Natural killer cell (primary cell): ENCODE measurements at regions of chr4 and their contacts with region 1.

Region 1: GRCh38 chr4:39032218-39033085 is at the start of gene TMEM156:
- DNase-seq: peak in 1 of 2 donors; percentile 81
- ATAC-seq: peak; percentile 89 to 93 (median 90)
- H3K4me3 ChIP-seq: peak within 1 kb of the TSS; percentile 67
- H3K4me3 Mint-ChIP-seq: peak within 1 kb of the TSS; percentile 88
- H3K27ac ChIP-seq: peak within 1 kb of the TSS; percentile 64
- H3K27ac Mint-ChIP-seq: peak within 1 kb of the TSS; percentile 87 to 90
- H3K4me1 ChIP-seq: peaks cover 26% of the 10 kb centered on the region
- H3K4me1 Mint-ChIP-seq: peaks cover 26 to 28% of the 10 kb centered on the region in 2 donors
- H3K27me3 ChIP-seq: no peaks in the 10 kb centered on the region
- H3K27me3 Mint-ChIP-seq: no peaks in the 10 kb centered on the region
- CTCF ChIP-seq: no peak
- total RNA-seq, gene TMEM156: 13.8 to 22.3 (median 16.8) TPM

Region 2: GRCh38 chr4:39044364-39044955 is 12.0 kb after region 1 on chr4:
- intact Hi-C with region 1: loop called (anchors 1 kb)
- DNase-seq: peak; percentile 94 to 99
- ATAC-seq: peak; percentile 86 to 96 (median 87)
- H3K4me3 ChIP-seq: peak overlapping the region; percentile 49
- H3K4me3 Mint-ChIP-seq: peak overlapping the region; percentile 90
- H3K27ac ChIP-seq: peak overlapping the region; percentile 80
- H3K27ac Mint-ChIP-seq: peak overlapping the region; percentile 92 to 93
- H3K4me1 ChIP-seq: peaks cover 22% of the 10 kb centered on the region
- H3K4me1 Mint-ChIP-seq: peaks cover 36 to 38% of the 10 kb centered on the region in 2 donors
- H3K27me3 ChIP-seq: no peaks in the 10 kb centered on the region
- H3K27me3 Mint-ChIP-seq: no peaks in the 10 kb centered on the region
- CTCF ChIP-seq: no peak